K562 (cell line): ENCODE measurements at regions of chr11 and their contacts with region 1.

Region 1: GRCh38 chr11:93921695-93922468 is 71.5 kb upstream of the VSTM5 start:
- DNase-seq: peak; percentile 53 to 75 (median 61)
- ATAC-seq: peak; percentile 98
- H3K4me3 ChIP-seq: no peak overlapping the region
- H3K27ac ChIP-seq: no peak overlapping the region
- H3K4me1 ChIP-seq: no peaks in the 10 kb centered on the region
- H3K27me3 ChIP-seq: no peaks in the 10 kb centered on the region
- CTCF ChIP-seq: peak; percentile 78 to 86 (median 83)
- EP300 ChIP-seq: no peak
- POLR2A ChIP-seq: no peak
- RAD21 ChIP-seq: peak; percentile 69 to 93

Region 2: DNA sequence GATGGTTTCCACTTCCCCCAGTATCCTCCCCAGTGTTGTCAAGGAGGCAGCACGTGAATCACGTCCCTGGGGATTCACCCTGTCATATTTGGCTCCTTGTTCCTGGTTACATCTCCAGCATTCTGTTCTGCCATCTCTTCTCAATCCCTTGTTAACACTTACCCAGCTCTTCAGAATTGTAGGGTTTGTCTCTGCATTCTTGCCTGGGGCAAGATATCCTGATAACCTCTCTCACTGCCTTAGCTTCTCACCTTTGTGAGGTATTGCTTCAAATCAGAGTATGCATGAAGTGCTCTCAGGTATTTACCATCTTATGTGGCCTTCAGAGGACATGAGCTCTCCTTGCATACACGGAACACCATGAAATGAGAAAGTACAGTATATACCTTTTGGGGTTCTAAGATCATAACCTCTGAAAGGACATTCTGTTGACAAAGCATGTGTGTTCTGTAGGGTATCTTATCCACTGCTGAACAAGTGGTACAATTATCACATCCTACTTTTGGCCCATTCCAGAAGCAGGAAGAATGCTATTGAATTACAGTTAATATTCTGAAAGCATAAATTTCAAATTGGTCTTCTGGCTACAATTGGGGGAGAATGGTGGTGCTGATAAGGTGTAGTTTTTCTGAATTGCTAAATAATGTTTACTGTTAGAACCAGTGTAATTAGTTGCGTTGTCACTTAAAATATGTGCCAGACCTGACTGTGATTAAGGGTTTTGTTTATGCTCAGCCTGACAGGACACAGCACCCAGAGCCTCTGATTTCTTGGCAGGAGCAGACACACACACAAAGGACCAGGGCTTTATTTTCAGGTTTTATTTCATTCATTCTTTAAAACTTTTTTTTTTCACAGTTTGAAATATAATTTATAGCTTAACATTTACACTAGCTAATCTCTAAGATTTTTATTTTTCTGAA is 104.2 kb before region 1 on chr11:
- CTCF ChIA-PET with region 1: no interaction called
- POLR2A ChIA-PET with region 1: no interaction called
- in situ Hi-C with region 1: no loop called
- intact Hi-C with region 1: no loop called
- DNase-seq: no peak
- ATAC-seq: no peak
- H3K4me3 ChIP-seq: no peak overlapping the region
- H3K27ac ChIP-seq: no peak overlapping the region
- H3K4me1 ChIP-seq: peaks cover 0 to 2% of the 10 kb centered on the region in 2 experiments; a peak in 1 of 5 replicates
- H3K27me3 ChIP-seq: peaks cover 4 to 8% of the 10 kb centered on the region in 2 experiments; a peak in 1 of 5 replicates
- CTCF ChIP-seq: no peak
- EP300 ChIP-seq: no peak
- POLR2A ChIP-seq: no peak
- RAD21 ChIP-seq: no peak

Region 3: GRCh38 chr11:93905384-93905783 is 16.5 kb before region 1 on chr11:
- CTCF ChIA-PET with region 1: no interaction called
- POLR2A ChIA-PET with region 1: no interaction called
- in situ Hi-C with region 1: no loop called
- intact Hi-C with region 1: no loop called
- DNase-seq: no peak
- ATAC-seq: no peak
- H3K4me3 ChIP-seq: no peak overlapping the region
- H3K27ac ChIP-seq: no peak overlapping the region
- H3K4me1 ChIP-seq: no peaks in the 10 kb centered on the region
- H3K27me3 ChIP-seq: peaks cover 6 to 8% of the 10 kb centered on the region in 2 experiments; a peak in 3 of 5 replicates
- CTCF ChIP-seq: no peak
- EP300 ChIP-seq: no peak
- POLR2A ChIP-seq: no peak
- RAD21 ChIP-seq: no peak

Region 4: DNA sequence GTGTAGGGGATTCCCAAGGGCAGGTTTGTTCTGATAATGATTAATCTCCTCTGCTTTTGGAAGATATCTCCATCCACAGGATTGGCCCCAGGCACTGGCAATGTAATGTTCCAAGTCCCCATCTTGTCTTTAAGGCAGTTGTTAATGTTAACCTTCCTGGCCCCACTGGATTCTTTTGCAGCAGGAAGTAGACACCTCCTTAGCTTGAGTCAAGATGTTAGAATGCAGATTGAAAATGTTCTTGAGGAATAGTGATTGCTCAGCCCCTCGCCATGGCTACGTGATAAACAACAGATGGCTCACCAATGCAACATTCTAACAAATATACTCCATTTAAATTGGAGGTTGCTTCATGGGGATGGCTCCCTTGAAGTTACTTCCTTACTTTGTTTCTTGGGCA is 106.6 kb after region 1 on chr11:
- CTCF ChIA-PET with region 1: no interaction called
- POLR2A ChIA-PET with region 1: no interaction called
- in situ Hi-C with region 1: no loop called
- intact Hi-C with region 1: loop called (anchors 10 kb)
- DNase-seq: no peak
- ATAC-seq: no peak
- H3K4me3 ChIP-seq: no peak overlapping the region
- H3K27ac ChIP-seq: no peak overlapping the region
- H3K4me1 ChIP-seq: peaks cover 0 to 5% of the 10 kb centered on the region in 2 experiments; a peak in 3 of 5 replicates
- H3K27me3 ChIP-seq: no peaks in the 10 kb centered on the region
- CTCF ChIP-seq: no peak
- EP300 ChIP-seq: no peak
- POLR2A ChIP-seq: no peak
- RAD21 ChIP-seq: no peak

Region 5: GRCh38 chr11:94046796-94047195 is 124.9 kb after region 1 on chr11:
- CTCF ChIA-PET with region 1: no interaction called
- POLR2A ChIA-PET with region 1: no interaction called
- in situ Hi-C with region 1: no loop called
- intact Hi-C with region 1: loop called (anchors 5 kb)
- DNase-seq: peak in 1 of 4 experiments; percentile 23
- ATAC-seq: peak; percentile 35
- H3K4me3 ChIP-seq: no peak overlapping the region
- H3K27ac ChIP-seq: peak overlapping the region; percentile 59
- H3K4me1 ChIP-seq: peaks cover 17 to 32% of the 10 kb centered on the region in 2 experiments; a peak in 3 of 5 replicates
- H3K27me3 ChIP-seq: no peaks in the 10 kb centered on the region
- CTCF ChIP-seq: no peak
- EP300 ChIP-seq: no peak
- POLR2A ChIP-seq: no peak
- RAD21 ChIP-seq: no peak

Region 6: GRCh38 chr11:94107363-94107762 is 185.5 kb after region 1 on chr11:
- CTCF ChIA-PET with region 1: no interaction called
- POLR2A ChIA-PET with region 1: no interaction called
- in situ Hi-C with region 1: no loop called
- intact Hi-C with region 1: loop called (anchors 1 kb)
- DNase-seq: no peak
- ATAC-seq: 0 out of 3 replicates have a peak, but pooled peaks have one; percentile 38
- H3K4me3 ChIP-seq: no peak overlapping the region
- H3K27ac ChIP-seq: no peak overlapping the region
- H3K4me1 ChIP-seq: no peaks in the 10 kb centered on the region
- H3K27me3 ChIP-seq: no peaks in the 10 kb centered on the region
- CTCF ChIP-seq: peak in 1 of 3 experiments; percentile 50; a peak in 2 of 6 replicates
- EP300 ChIP-seq: no peak
- POLR2A ChIP-seq: no peak
- RAD21 ChIP-seq: peak; percentile 17 to 53; a peak in 3 of 4 replicates

Region 7: DNA sequence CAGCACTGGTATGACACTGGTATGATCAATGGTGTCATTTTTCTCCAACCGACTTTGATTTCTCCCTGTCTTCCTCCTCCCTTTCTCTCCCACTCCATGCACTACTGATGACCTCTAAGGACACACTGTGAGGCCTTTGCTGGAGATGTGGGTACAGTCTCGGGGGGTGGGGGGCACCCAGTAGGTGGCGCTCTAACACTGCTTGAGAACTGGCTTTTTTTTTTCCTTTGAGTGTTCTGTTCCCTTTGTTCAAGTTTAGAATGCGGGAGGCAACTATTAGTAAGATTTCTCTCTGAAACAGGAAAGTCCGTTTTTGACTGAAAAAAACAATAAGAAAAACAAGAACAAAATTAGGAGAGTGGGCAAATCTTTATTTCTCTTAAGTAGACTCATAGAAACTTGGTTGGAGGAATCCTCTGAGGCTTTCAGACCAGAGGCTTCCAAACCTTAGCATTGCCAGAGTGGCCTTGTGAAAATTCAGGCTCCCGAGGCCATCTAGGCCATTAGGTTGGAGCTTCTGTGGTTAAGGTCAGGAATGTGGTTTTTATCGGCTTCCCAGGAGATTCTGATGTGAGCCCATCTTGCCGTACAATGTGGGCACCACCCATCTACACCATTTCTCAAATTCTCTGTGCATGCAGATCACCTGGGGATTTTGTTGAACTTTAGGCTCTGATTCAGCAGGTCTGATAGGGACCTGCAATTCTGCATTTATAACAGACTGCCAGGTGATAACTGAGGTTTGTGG is 250.0 kb after region 1 on chr11:
- CTCF ChIA-PET with region 1: no interaction called
- POLR2A ChIA-PET with region 1: no interaction called
- in situ Hi-C with region 1: no loop called
- intact Hi-C with region 1: loop called (anchors 5 kb)
- DNase-seq: peak; percentile 75 to 84 (median 82)
- ATAC-seq: peak; percentile 96
- H3K4me3 ChIP-seq: no peak overlapping the region
- H3K27ac ChIP-seq: no peak overlapping the region
- H3K4me1 ChIP-seq: no peaks in the 10 kb centered on the region; a peak in 1 of 5 replicates
- H3K27me3 ChIP-seq: no peaks in the 10 kb centered on the region
- CTCF ChIP-seq: peak; percentile 77 to 91 (median 79)
- EP300 ChIP-seq: no peak
- POLR2A ChIP-seq: no peak
- RAD21 ChIP-seq: peak; percentile 50 to 60; a peak in 3 of 4 replicates